Body of pancreas (tissue), 4 donors: ENCODE measurements at regions of chr10 and their contacts with region 1.

Region 1: DNA sequence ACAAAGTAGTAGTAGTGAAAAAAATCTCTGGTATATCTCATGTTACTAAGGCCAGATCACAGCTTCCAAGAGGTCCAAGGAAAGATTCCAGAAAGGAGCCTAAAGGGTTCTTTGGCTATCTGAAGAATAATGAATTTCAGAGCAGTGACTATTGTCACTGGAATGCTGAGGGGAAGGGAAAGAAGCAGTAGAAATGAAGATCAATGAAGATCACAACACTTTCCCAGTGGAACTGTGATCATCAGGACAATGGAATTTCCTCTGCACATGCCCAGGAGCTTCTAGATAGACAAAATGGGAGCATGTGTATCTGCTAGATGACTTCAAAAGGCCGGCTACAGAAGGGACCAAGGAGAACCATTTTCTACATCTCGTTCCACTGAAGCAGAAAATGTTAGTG is 219.5 kb upstream of the PHYHIPL start:
- DNase-seq: no peak
- ATAC-seq: no peak
- H3K4me3 ChIP-seq: no peak overlapping the region
- H3K27ac ChIP-seq: no peak overlapping the region
- H3K4me1 ChIP-seq: peaks cover 9% of the 10 kb centered on the region
- H3K27me3 ChIP-seq: no peaks in the 10 kb centered on the region
- CTCF ChIP-seq: no peak
- POLR2A ChIP-seq: no peak

Region 2: GRCh38 chr10:59173414-59173813 is 216.5 kb after region 1 on chr10:
- intact Hi-C with region 1: loop called (anchors 5 kb)
- DNase-seq: no peak
- ATAC-seq: no peak
- H3K4me3 ChIP-seq: no peak overlapping the region
- H3K27ac ChIP-seq: no peak overlapping the region
- H3K4me1 ChIP-seq: peaks cover 8% of the 10 kb centered on the region
- H3K27me3 ChIP-seq: no peaks in the 10 kb centered on the region
- CTCF ChIP-seq: no peak
- POLR2A ChIP-seq: no peak